ENCODE measurements at regions of chr3 and their contacts with region 1.

Region 1: DNA sequence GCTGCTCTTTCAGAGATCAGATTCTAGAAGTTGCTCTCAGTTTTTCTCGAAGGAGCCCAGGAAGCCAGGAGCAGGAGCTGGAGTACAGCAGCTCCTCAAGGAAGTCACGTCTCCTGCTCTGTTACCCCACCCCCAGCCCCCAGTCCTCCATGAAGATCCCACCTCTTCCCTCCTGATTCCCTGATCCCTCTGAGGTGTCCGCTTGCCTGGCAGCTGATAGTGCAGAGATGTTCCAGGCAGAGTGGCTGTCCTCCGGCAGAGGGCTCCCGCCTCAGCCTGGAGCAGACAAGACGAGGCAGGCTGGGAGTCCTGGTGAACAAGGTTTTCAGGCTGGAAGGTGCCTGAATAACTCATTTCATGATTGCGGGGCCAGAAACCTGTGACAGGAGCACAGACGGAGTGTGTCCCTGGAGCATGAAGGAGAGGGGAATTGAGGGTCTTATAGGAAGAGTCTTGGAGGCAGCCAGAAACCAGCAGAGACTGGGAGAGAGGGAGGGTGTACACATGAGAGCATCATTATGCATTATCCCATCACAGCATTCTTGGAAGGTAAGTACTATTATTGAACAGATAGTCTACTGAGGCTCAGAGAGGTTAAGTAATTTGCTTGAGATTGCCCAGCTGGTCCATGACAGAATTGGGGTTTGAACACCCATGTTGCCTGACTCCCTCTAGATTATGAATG is 1.2 kb downstream of the HRH1 start:
- H3K4me3 ChIP-seq: peak overlapping the region; percentile 48
- H3K27ac ChIP-seq: no peak overlapping the region
- H3K4me1 ChIP-seq: peaks cover 5% of the 10 kb centered on the region
- CTCF ChIP-seq: peak; percentile 69

Region 2: DNA sequence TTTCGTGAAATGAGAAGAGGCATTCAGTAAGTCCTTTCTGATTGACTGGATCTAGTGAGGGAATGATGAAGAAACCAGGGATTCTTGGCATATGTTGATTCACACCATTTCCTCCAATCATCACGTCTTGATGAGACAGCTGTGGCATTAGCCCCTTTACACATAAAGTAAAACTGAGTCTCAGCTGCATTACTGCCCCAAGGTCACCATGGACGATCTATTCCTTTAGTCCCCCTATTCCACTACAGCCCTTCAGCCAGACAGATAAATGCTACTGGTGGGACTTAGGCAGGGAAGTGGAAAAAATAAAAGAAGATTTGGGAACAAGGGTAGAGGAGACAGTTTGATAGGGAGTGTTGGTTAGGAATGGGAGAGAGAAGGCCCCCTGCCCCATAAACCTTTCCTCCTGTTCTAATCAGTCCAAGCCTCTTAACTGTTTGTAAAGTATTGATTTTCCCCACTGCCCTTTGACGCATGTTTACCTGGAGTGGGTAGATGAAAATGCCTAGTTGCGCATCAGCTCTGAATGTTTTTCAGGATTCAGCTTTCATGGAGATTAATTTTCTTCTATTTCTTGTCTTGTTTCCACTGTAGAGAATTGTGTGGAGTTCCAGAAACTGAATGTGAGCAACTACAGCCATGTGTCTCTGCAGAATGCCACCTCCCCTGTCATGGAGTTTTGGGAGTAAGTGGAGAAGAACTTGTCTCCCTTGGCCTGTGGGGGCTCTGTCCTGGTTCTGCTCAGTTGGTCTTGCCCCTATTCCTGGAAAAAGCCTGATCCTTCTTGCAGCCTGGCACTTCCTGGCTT is 332.6 kb before region 1 on chr3:
- CTCF ChIA-PET with region 1: no interaction called
- POLR2A ChIA-PET with region 1: no interaction called
- H3K4me3 ChIP-seq: no peak overlapping the region
- H3K27ac ChIP-seq: no peak overlapping the region
- H3K4me1 ChIP-seq: no peaks in the 10 kb centered on the region
- CTCF ChIP-seq: no peak

Region 3: DNA sequence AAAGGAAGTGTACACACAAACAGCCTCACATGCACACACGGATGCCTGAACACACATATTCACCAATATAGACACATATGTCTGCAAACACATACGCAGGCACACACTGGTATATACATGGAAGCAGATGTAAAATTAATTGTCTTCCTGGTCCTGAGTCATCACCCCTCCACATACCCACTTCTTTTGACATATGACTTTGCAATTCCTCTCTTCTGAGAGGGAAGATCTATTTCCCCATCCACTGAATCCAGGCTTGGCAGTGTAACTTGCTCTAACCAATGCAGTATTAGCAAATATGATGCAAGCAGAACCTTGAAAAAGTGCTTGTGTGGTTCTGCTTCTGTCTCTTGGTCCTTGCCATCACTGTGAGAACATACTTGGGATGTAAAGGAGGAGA is 78.0 kb before region 1 on chr3:
- CTCF ChIA-PET with region 1: no interaction called
- POLR2A ChIA-PET with region 1: no interaction called
- H3K4me3 ChIP-seq: no peak overlapping the region
- H3K27ac ChIP-seq: no peak overlapping the region
- H3K4me1 ChIP-seq: no peaks in the 10 kb centered on the region
- CTCF ChIP-seq: no peak

Region 4: GRCh38 chr3:11204697-11205348 is 49.3 kb after region 1 on chr3:
- CTCF ChIA-PET with region 1: interaction called, 20 read pairs
- POLR2A ChIA-PET with region 1: no interaction called
- H3K4me3 ChIP-seq: no peak overlapping the region
- H3K27ac ChIP-seq: no peak overlapping the region
- H3K4me1 ChIP-seq: no peaks in the 10 kb centered on the region
- CTCF ChIP-seq: no peak

Measured in HEK293 (cell line).